Cardiac septum (tissue), 1 donor: ENCODE measurements at regions of chr15 and their contacts with region 1.

Region 1: DNA sequence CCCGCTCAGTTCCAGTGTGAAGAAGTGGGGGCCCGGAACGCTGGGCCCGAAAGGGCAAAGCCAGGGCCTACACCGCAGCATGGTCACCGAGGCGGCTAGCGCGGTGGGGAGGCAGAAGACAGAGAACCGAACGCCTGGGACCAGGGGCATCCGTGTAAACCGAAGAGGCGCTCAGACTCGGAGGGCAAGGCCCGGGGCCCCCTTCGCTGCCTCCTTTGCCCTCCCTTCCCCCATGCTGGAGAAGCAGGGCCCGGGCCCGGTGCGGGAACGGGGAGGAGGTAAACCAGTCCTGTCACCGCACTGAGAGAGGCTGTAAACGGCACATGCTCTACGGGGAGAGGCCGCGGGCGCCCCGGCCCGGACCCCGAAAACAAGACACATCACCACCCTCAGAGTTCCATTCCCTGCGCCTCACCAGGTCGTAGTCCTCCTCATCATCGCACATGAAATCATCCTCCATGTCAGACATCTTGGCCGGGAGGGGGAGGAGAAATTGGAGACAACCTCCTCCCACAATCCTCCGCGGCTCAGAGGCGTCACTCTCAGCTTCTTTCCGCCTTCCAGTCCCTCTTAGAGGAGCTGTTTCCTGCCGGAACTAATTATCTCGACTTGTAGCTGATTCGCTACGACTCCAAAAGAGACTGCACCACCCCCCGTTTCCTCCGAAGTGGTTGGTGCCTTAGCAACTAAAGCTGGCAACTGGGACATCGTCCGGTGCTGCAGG is at the start of gene COPS2:
- DNase-seq: peak; percentile 97
- total RNA-seq, gene COPS2: 71.6 TPM

Region 2: GRCh38 chr15:49046220-49047102 is 108.8 kb before region 1 on chr15 and contains the start of gene SECISBP2L:
- intact Hi-C with region 1: loop called (anchors 2 kb)
- DNase-seq: peak; percentile 97
- total RNA-seq, gene SECISBP2L: 40.9 TPM

Region 3: DNA sequence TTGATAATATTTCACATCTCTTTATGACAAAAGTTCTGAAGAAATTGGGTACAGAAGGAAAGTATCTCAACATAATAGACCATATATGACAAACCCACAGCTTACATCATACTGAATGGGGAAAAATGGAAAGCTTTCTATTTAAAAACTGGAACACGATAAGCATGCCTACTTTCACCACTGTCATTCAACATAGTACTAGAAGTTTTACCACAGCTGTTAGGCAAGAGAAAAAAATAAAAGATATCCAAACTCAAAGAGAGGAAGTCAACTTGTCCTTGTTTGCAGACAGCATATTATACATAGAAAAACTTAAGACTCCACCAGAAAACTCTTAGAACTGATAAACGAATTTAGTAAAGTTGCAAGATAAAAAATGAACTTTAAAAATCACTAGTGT is 40.2 kb before region 1 on chr15:
- intact Hi-C with region 1: no loop called
- DNase-seq: no peak

Region 4: DNA sequence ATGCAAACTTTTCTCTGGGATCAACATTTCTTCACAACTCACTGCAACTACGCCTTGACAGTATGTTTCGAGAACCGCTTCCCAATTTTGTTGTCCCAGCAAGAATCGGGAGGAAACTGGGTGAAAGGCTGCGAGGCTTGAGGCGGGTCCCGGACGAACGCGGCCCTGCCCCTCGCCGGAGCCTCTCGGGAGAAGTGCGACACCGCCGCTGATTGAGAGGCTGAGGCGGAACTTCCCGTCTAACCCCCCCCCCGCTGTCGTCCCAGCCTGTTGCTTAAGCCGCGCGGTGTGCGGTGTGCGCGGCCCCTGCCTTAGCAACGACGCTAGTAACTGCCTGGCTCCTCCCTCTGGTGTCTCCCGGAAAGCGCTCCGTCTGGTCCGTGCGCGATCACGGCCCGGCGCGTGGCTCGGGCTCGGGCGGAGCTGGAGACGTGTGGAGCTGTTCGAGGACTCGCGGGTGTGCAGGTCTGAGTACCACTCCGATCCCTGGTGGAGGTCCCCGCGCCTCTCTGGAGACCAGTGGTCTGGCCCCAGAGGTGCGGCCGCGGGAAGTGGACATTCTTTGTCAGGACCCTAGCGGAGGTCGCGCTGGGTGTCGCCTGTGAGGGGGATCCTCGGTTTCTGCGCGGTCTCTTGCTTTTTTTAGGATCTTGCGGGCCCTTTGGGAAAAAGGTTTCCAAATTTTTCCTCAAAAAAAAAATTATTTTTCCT is 465.5 kb after region 1 on chr15 and contains the starts of genes DTWD1 and FAM227B:
- intact Hi-C with region 1: loop called (anchors 2 kb)
- DNase-seq: peak; percentile 98
- total RNA-seq, gene DTWD1: 14.3 TPM
- total RNA-seq, gene FAM227B: 11.5 TPM